K562 (cell line): ENCODE measurements at regions of chr12 and their contacts with region 1.

Region 1: DNA sequence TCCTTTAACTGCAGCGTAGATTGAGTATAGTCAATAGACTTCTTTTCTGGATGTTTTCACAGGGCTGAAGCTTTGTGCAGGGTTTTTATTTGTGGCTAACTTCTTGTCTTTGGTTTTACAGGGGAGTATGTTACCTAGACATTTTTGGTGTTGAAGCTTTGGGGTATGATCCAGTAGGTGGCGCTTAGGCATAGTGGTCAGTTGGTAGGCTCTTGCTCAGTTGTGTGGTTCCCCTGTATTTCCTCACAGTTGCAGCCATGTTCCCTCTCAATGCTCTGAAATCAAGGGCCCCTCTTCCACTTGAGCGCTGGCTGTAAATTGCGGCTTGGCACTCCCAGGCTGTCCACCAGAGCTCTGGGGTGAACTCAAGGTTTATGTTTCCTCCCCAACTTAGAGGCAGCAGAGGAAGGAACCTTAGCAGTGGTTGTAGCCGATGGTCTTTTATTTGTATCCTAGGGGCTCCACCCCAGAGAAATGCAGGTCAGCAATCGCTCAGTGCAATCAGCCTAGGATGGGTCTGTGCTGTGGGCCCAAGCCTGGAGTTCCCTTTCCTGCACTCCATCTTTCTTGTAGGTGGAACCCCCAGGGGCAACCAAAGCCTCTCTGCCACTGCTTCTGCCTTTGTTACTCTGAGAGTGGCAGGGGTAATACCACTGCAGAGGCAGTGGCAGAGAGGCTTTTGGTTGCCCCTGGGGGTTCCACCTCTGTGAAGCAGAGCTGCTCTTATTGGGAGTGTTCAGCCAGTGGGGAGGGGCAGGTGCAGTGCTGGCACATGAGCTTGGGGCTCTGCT is 55.1 kb downstream of the CMAS start:
- DNase-seq: peak in 1 of 4 experiments; percentile 40
- ATAC-seq: peak; percentile 77
- H3K4me3 ChIP-seq: no peak overlapping the region
- H3K27ac ChIP-seq: no peak overlapping the region
- H3K4me1 ChIP-seq: no peaks in the 10 kb centered on the region; a peak in 1 of 5 replicates
- H3K27me3 ChIP-seq: no peaks in the 10 kb centered on the region
- CTCF ChIP-seq: peak; percentile 33 to 48 (median 43); a peak in 5 of 6 replicates
- EP300 ChIP-seq: no peak
- POLR2A ChIP-seq: no peak
- RAD21 ChIP-seq: peak in 1 of 2 experiments; percentile 50; a peak in 2 of 4 replicates

Region 2: DNA sequence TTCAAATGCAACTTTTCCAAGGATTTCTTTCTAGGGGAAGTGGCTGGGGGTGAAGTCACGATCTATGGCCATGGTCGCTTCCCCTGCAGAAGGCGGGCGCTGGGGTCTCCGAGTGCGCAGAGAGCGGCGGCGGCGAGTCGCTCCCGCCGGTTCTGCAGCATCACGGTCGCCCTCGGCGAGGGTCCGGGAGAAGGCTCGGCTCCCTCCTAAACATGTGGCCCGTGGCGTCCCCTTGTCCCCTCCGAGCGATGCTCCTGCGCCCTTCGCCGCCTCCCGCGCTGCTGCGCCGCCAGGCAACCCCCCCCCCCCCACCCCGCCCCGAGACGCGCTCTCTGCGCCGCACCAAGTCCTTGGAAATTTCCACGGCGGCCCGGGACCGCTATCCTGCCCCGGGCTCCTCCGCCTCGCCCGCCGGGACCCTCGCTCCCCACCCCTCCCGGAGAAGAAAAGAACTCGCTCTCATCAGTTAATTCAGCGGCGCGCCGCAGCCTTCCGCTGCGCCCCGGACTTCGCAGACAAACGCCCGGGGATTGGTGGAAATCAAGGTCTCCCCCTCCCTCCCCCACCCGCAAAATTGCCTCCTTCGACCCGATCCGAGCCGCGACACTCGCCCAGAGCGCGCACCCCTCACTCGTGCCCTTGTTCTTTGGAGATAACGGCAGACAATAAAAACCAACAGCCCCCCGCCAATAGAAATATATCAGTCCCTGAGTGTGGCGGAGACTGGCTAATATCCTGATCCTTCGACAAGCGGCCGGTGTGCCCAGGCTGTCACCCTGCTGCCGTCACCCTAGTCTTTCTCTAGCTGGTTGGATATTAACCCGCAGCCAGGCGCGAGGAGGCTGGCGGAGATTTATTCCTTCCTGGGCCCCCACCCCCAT is 233.5 kb after region 1 on chr12 and contains the start of gene ST8SIA1:
- CTCF ChIA-PET with region 1: no interaction called
- POLR2A ChIA-PET with region 1: no interaction called
- in situ Hi-C with region 1: loop called (anchors 10 kb)
- intact Hi-C with region 1: no loop called
- DNase-seq: no peak
- ATAC-seq: no peak
- H3K4me3 ChIP-seq: peak within 1 kb of the TSS; percentile 27
- H3K27ac ChIP-seq: no peak within 1 kb of the TSS
- H3K4me1 ChIP-seq: peaks cover 0 to 18% of the 10 kb centered on the region in 2 experiments; a peak in 2 of 5 replicates
- H3K27me3 ChIP-seq: peaks cover 0 to 10% of the 10 kb centered on the region in 2 experiments; a peak in 3 of 5 replicates
- CTCF ChIP-seq: no peak
- EP300 ChIP-seq: no peak
- POLR2A ChIP-seq: no peak
- RAD21 ChIP-seq: no peak
- polyA plus RNA-seq, gene ST8SIA1: 22.9 to 26.3 TPM